ENCODE measurements at regions of chr9 and their contacts with region 1.

Region 1: GRCh38 chr9:125763394-125763801 is 16.2 kb downstream of the PBX3 start:
- DNase-seq: no peak
- H3K4me3 ChIP-seq: no peak overlapping the region
- H3K27ac ChIP-seq: no peak overlapping the region
- H3K4me1 ChIP-seq: peaks cover 0 to 88% (median 53%) of the 10 kb centered on the region in 6 donors
- H3K27me3 ChIP-seq: no peaks in the 10 kb centered on the region
- CTCF ChIP-seq: no peak
- POLR2A ChIP-seq: no peak

Region 2: GRCh38 chr9:125815568-125815967 is 52.2 kb after region 1 on chr9:
- intact Hi-C with region 1: loop called (anchors 10 kb)
- DNase-seq: no peak
- H3K4me3 ChIP-seq: no peak overlapping the region
- H3K27ac ChIP-seq: no peak overlapping the region
- H3K4me1 ChIP-seq: peaks cover 7 to 10% (median 9%) of the 10 kb centered on the region in 6 donors
- H3K27me3 ChIP-seq: no peaks in the 10 kb centered on the region
- CTCF ChIP-seq: no peak
- POLR2A ChIP-seq: no peak